ENCODE measurements at regions of chr11 and their contacts with region 1.

Region 1: DNA sequence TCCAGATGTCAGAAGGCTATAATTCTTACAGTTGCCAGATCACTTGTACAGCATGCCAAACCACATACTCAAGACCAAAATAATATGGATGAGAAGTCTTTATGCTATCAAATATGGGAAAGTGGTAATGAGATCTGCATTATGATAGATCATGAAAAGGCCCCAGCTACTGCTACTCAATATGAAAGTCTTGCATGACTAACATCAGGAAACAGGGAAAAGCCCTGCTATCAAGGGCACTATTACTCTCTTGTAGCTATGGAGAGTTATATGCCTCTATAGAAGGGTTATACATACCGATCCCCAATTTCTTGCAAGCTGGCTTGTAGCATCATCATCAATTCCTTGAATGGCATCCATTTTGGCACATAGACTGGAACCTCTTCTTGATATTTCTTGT is 30.2 kb upstream of the TMPRSS5 start:
- DNase-seq: no peak
- H3K4me3 Mint-ChIP-seq: no peak overlapping the region
- H3K27ac Mint-ChIP-seq: no peak overlapping the region
- H3K4me1 Mint-ChIP-seq: peaks cover 12% of the 10 kb centered on the region
- H3K27me3 Mint-ChIP-seq: no peaks in the 10 kb centered on the region

Region 2: GRCh38 chr11:113587308-113587739 is 149.0 kb before region 1 on chr11:
- CTCF ChIA-PET with region 1: no interaction called
- intact Hi-C with region 1: loop called (anchors 5 kb)
- DNase-seq: peak; percentile 59
- H3K4me3 Mint-ChIP-seq: no peak overlapping the region
- H3K27ac Mint-ChIP-seq: no peak overlapping the region
- H3K4me1 Mint-ChIP-seq: peaks cover 4% of the 10 kb centered on the region
- H3K27me3 Mint-ChIP-seq: peaks cover 11% of the 10 kb centered on the region